ENCODE measurements at regions of chr6 and their contacts with region 1.

Region 1: GRCh38 chr6:36027501-36028087 is at the start of gene MAPK14:
- DNase-seq: peak; percentile 100
- H3K4me3 Mint-ChIP-seq: peak within 1 kb of the TSS; percentile 88
- H3K27ac Mint-ChIP-seq: peak within 1 kb of the TSS; percentile 94
- H3K4me1 Mint-ChIP-seq: peaks cover 9% of the 10 kb centered on the region
- H3K27me3 Mint-ChIP-seq: no peaks in the 10 kb centered on the region
- CTCF ChIP-seq: peak; percentile 74
- total RNA-seq, gene MAPK14: 42.9 and 46.2 TPM in 2 replicates

Region 2: GRCh38 chr6:35920793-35921732 is 106.5 kb before region 1 on chr6 and contains the start of gene SRPK1:
- CTCF ChIA-PET with region 1: interaction called, 4 read pairs
- POLR2A ChIA-PET with region 1: interaction called, 54 read pairs
- intact Hi-C with region 1: loop called (anchors 2 kb)
- DNase-seq: peak; percentile 88
- H3K4me3 Mint-ChIP-seq: peak within 1 kb of the TSS; percentile 99
- H3K27ac Mint-ChIP-seq: peak within 1 kb of the TSS; percentile 93
- H3K4me1 Mint-ChIP-seq: peaks cover 30% of the 10 kb centered on the region
- H3K27me3 Mint-ChIP-seq: no peaks in the 10 kb centered on the region
- CTCF ChIP-seq: no peak
- total RNA-seq, gene SRPK1: 80.7 and 83.9 TPM in 2 replicates

Region 3: GRCh38 chr6:36038120-36038876 is 10.7 kb after region 1 on chr6:
- CTCF ChIA-PET with region 1: interaction called, 9 read pairs
- POLR2A ChIA-PET with region 1: interaction called, 77 read pairs
- intact Hi-C with region 1: no loop called
- DNase-seq: no peak
- H3K4me3 Mint-ChIP-seq: no peak overlapping the region
- H3K27ac Mint-ChIP-seq: no peak overlapping the region
- H3K4me1 Mint-ChIP-seq: peaks cover 30% of the 10 kb centered on the region
- H3K27me3 Mint-ChIP-seq: no peaks in the 10 kb centered on the region
- CTCF ChIP-seq: no peak

Region 4: GRCh38 chr6:36067374-36068011 is 39.9 kb after region 1 on chr6:
- CTCF ChIA-PET with region 1: interaction called, 5 read pairs
- POLR2A ChIA-PET with region 1: interaction called, 13 read pairs
- intact Hi-C with region 1: no loop called
- DNase-seq: no peak
- H3K4me3 Mint-ChIP-seq: no peak overlapping the region
- H3K27ac Mint-ChIP-seq: peak overlapping the region; percentile 28
- H3K4me1 Mint-ChIP-seq: peaks cover 26% of the 10 kb centered on the region
- H3K27me3 Mint-ChIP-seq: no peaks in the 10 kb centered on the region
- CTCF ChIP-seq: no peak

Region 5: GRCh38 chr6:36083446-36083845 is 55.9 kb after region 1 on chr6:
- CTCF ChIA-PET with region 1: interaction called, 17 read pairs
- POLR2A ChIA-PET with region 1: interaction called, 4 read pairs
- intact Hi-C with region 1: no loop called
- DNase-seq: no peak
- H3K4me3 Mint-ChIP-seq: no peak overlapping the region
- H3K27ac Mint-ChIP-seq: no peak overlapping the region
- H3K4me1 Mint-ChIP-seq: no peaks in the 10 kb centered on the region
- H3K27me3 Mint-ChIP-seq: no peaks in the 10 kb centered on the region
- CTCF ChIP-seq: no peak

Region 6: DNA sequence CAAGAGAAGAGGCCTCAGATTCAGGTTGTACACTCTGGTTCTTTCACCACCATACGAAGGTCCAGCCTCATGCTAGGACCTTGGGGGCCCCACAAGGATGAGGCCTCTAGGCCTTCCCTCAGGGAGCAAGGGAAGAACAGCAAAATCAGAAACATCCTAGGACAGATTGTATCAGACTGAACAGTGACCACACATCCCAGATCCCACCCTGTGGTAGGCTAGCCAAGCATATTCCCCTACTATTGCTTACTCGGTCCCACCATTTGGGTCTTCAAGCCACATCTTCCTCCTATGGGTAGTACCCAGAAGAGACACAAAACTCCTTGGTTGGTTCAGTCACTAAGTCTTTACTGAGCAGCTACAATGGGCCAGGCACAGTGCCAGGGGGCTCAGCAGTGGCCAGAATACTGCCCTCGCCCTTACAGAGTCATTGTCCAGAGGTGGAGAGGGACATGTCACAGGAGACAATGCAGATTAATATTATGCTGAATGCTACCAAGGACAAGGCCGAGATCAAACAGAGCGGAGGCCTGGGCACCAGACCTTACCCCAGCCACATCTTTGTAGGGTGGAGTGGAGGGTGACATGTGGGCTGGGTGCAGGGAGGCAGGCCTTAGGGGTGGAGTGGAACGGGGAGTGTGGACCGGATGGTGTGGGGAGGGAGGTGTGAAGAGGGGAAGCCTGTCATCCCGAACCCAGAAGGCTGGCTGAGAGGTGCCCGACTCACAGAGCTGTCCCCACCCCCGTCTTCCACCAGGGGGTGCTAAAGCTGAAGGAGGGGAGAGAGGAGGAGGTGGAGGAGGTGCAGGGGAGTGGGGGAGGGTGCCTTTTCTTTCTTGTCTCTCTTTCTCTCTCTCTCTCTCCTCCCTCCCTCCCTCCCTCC is 95.9 kb after region 1 on chr6:
- CTCF ChIA-PET with region 1: interaction called, 3 read pairs
- POLR2A ChIA-PET with region 1: interaction called, 13 read pairs
- intact Hi-C with region 1: no loop called
- DNase-seq: peak; percentile 92
- H3K4me3 Mint-ChIP-seq: no peak overlapping the region
- H3K27ac Mint-ChIP-seq: no peak overlapping the region
- H3K4me1 Mint-ChIP-seq: peaks cover 18% of the 10 kb centered on the region
- H3K27me3 Mint-ChIP-seq: no peaks in the 10 kb centered on the region
- CTCF ChIP-seq: peak; percentile 80

Region 7: DNA sequence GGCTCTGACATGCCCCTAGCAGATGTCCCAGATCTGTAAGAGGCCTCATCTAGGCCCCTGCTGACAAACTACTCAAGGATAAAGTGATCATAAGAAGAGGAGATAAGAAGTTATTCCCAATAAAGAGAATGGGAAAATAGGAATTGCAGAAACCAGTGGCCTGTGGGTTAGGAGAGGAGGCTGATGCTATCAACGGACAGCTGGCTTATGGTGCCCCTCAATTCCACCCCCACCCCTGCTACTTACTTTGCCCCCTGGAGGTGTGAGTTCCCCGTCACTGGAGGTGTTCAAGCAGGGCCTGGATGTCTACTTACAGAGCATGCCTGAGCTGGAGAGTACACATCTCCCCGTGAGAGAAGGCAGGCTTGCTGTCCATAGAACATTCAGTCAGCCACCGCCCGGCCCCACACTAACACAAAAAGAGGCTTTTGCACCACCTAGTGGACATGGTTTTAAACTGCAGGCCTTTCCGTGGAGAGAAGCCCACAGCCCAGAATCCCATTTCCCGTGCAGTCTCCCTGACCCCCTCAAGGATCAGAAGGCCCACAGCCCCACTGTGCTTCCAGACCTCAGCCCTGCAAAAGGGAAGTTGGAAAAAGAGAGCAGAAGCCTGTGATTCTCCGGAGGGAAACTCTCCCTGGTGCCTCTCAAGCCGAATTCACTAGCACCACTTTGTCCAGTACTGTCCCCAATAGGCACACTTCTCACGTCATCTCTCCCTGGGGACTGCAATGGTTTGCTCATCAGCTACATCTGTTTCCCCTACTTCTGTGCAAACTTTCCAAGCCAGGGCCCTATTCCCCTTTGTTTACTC is 332.9 kb after region 1 on chr6:
- CTCF ChIA-PET with region 1: interaction called, 6 read pairs
- POLR2A ChIA-PET with region 1: no interaction called
- intact Hi-C with region 1: loop called (anchors 2 kb)
- DNase-seq: peak; percentile 84
- H3K4me3 Mint-ChIP-seq: no peak overlapping the region
- H3K27ac Mint-ChIP-seq: no peak overlapping the region
- H3K4me1 Mint-ChIP-seq: no peaks in the 10 kb centered on the region
- H3K27me3 Mint-ChIP-seq: no peaks in the 10 kb centered on the region
- CTCF ChIP-seq: peak; percentile 86